Activated naive CD4-positive, alpha-beta T cell treated with anti-CD3 and anti-CD28 coated beads for 36 hours (primary cell): ENCODE measurements at regions of chrX and their contacts with region 1.

Region 1: GRCh38 chrX:9566150-9566621 is 101.3 kb downstream of the TBL1X start:
- DNase-seq: peak; percentile 41
- H3K4me3 Mint-ChIP-seq: no peak overlapping the region
- H3K27ac Mint-ChIP-seq: no peak overlapping the region
- H3K4me1 Mint-ChIP-seq: peaks cover 19% of the 10 kb centered on the region
- H3K27me3 Mint-ChIP-seq: no peaks in the 10 kb centered on the region

Region 2: DNA sequence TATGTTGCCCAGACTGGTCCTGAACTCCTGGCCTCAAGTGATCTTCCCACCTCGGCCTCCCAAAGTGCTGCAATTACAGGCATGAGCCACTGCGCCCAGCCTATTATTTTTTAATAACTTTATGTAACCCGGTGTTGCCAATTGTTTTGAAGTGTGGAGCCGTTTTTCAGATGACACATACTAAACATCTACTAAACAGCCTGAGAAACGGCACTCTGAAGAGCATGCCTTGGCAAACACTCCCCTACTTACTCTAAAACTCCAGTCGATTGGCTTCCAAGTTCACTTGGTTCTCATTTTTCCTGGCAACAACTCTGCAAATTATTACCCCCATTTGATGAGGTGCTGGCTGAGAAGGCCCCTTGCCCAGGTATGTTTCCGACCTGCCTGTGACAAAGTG is 68.4 kb after region 1 on chrX:
- CTCF ChIA-PET with region 1: no interaction called
- intact Hi-C with region 1: loop called (anchors 5 kb)
- DNase-seq: no peak
- H3K4me3 Mint-ChIP-seq: no peak overlapping the region
- H3K27ac Mint-ChIP-seq: no peak overlapping the region
- H3K4me1 Mint-ChIP-seq: peaks cover 30% of the 10 kb centered on the region
- H3K27me3 Mint-ChIP-seq: no peaks in the 10 kb centered on the region